IMR-90 (cell line): ENCODE measurements at regions of chr12 and their contacts with region 1.

Region 1: DNA sequence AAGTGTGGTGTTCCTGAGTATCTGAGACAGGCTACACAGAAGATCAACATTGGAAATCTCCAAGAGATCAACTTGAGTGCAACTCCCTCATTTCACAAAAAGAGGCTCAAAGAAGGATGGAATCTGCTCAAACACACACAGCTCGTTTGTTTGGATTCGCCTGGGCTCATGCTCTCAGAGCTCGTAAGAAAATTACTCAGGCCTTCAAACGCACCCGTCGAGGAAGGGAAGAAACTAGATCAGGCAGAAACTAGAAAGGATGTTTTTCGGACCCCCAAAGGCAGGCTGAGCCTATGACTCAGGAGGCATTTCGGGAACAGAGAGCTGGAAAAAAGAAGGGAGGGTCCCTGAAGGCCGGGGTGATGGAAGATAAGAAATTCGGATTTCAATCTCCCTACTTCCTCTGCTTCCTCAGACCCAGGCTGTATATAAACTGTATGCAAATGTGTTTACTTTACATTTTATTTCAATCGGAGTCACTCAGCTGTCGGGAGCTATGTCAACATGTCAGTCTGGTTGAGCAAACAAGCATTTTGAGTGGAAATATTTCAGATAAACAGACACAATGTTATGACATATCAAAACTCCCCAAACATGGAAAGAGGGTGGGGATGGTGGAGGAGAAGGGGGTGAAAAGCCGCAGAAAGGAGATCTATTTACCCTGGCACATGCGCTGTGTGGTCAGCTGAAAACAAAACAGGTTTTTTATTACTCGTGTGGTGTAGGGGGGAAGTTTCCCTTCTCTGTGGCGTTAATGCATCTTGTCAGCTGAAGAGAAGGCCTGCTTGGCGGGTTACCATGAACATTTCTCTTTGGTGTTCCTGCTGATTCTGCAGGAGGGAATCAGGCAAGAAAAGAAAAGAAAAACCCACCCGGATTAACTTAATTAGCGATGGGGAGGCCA is 129.1 kb upstream of the TBX3 start:
- DNase-seq: peak; percentile 74
- ATAC-seq: peak; percentile 89
- H3K4me3 ChIP-seq: peak overlapping the region; percentile 7; the same call in 1 of the 2 replicates
- H3K27ac ChIP-seq: peak overlapping the region; percentile 88
- H3K4me1 ChIP-seq: peaks cover 4% of the 10 kb centered on the region; the same call in 1 of the 2 replicates
- H3K27me3 ChIP-seq: no peaks in the 10 kb centered on the region
- CTCF ChIP-seq: no peak
- POLR2A ChIP-seq: no peak
- RAD21 ChIP-seq: no peak

Region 2: GRCh38 chr12:114692558-114693480 is 120.3 kb before region 1 on chr12:
- CTCF ChIA-PET with region 1: no interaction called
- POLR2A ChIA-PET with region 1: interaction called, 13 read pairs
- dilution Hi-C with region 1: no loop called
- in situ Hi-C with region 1: no loop called
- intact Hi-C with region 1: no loop called
- DNase-seq: no peak
- ATAC-seq: peak; percentile 64
- H3K4me3 ChIP-seq: peak overlapping the region; percentile 76
- H3K27ac ChIP-seq: peak overlapping the region; percentile 83
- H3K4me1 ChIP-seq: peaks cover 19% of the 10 kb centered on the region
- H3K27me3 ChIP-seq: no peaks in the 10 kb centered on the region
- CTCF ChIP-seq: peak; percentile 23; the same call in 1 of the 2 replicates
- POLR2A ChIP-seq: no peak
- RAD21 ChIP-seq: no peak

Region 3: GRCh38 chr12:114762490-114763110 is 50.5 kb before region 1 on chr12:
- CTCF ChIA-PET with region 1: no interaction called
- POLR2A ChIA-PET with region 1: no interaction called
- dilution Hi-C with region 1: no loop called
- in situ Hi-C with region 1: no loop called
- intact Hi-C with region 1: loop called (anchors 2 kb)
- DNase-seq: peak; percentile 95
- ATAC-seq: peak; percentile 87
- H3K4me3 ChIP-seq: no peak overlapping the region; the same call in 1 of the 2 replicates
- H3K27ac ChIP-seq: peak overlapping the region; percentile 87
- H3K4me1 ChIP-seq: peaks cover 6% of the 10 kb centered on the region
- H3K27me3 ChIP-seq: no peaks in the 10 kb centered on the region
- CTCF ChIP-seq: no peak
- POLR2A ChIP-seq: no peak
- RAD21 ChIP-seq: no peak; the same call in 1 of the 2 replicates

Region 4: GRCh38 chr12:114799574-114800487 is 13.3 kb before region 1 on chr12:
- CTCF ChIA-PET with region 1: no interaction called
- POLR2A ChIA-PET with region 1: interaction called, 12 read pairs
- dilution Hi-C with region 1: no loop called
- in situ Hi-C with region 1: no loop called
- intact Hi-C with region 1: no loop called
- DNase-seq: peak; percentile 41
- ATAC-seq: peak; percentile 77
- H3K4me3 ChIP-seq: no peak overlapping the region
- H3K27ac ChIP-seq: peak overlapping the region; percentile 74
- H3K4me1 ChIP-seq: peaks cover 6% of the 10 kb centered on the region
- H3K27me3 ChIP-seq: no peaks in the 10 kb centered on the region
- CTCF ChIP-seq: no peak
- POLR2A ChIP-seq: no peak
- RAD21 ChIP-seq: no peak

Region 5: GRCh38 chr12:114876968-114877660 is 64.0 kb after region 1 on chr12:
- CTCF ChIA-PET with region 1: no interaction called
- POLR2A ChIA-PET with region 1: no interaction called
- dilution Hi-C with region 1: no loop called
- in situ Hi-C with region 1: no loop called
- intact Hi-C with region 1: no loop called
- DNase-seq: no peak
- ATAC-seq: no peak
- H3K4me3 ChIP-seq: no peak overlapping the region
- H3K27ac ChIP-seq: no peak overlapping the region
- H3K4me1 ChIP-seq: no peaks in the 10 kb centered on the region
- H3K27me3 ChIP-seq: no peaks in the 10 kb centered on the region
- CTCF ChIP-seq: no peak
- POLR2A ChIP-seq: no peak
- RAD21 ChIP-seq: no peak

Region 6: DNA sequence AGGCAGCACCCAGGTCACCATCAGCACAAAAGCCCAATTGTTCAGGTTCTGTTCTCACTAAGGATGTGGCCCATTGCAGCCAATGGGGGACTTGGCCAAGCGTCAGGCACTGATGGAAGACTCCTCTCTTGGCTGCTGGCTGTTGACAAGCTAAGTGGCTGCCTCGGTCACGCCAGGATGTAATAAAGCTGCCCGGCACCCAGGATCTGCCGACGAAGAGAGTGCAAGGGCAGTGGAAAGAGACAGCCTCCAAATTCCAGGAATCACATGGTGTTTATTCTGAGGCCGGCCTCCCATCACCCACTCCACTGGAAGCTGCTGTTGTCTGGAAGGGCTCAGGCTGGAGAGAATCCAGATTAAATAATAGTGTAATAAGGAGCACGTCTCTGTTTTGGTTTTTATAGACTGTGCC is 322.7 kb after region 1 on chr12:
- CTCF ChIA-PET with region 1: no interaction called
- POLR2A ChIA-PET with region 1: no interaction called
- dilution Hi-C with region 1: no loop called
- in situ Hi-C with region 1: no loop called
- intact Hi-C with region 1: loop called (anchors 10 kb)
- DNase-seq: peak; percentile 49
- ATAC-seq: peak; percentile 85
- H3K4me3 ChIP-seq: no peak overlapping the region
- H3K27ac ChIP-seq: peak overlapping the region; percentile 41; the same call in 1 of the 2 replicates
- H3K4me1 ChIP-seq: peaks cover 11% of the 10 kb centered on the region
- H3K27me3 ChIP-seq: no peaks in the 10 kb centered on the region
- CTCF ChIP-seq: no peak
- POLR2A ChIP-seq: no peak
- RAD21 ChIP-seq: no peak